Upper lobe of right lung (tissue), 1 donor: ENCODE measurements at regions of chr16 and their contacts with region 1.

Region 1: GRCh38 chr16:85821441-85822135 is 22.1 kb downstream of the COX4I1 start:
- DNase-seq: peak; percentile 87
- ATAC-seq: peak; percentile 97
- H3K4me3 ChIP-seq: no peak overlapping the region
- H3K27ac ChIP-seq: no peak overlapping the region
- H3K4me1 ChIP-seq: no peaks in the 10 kb centered on the region
- H3K27me3 ChIP-seq: peaks cover 10% of the 10 kb centered on the region
- CTCF ChIP-seq: peak; percentile 99

Region 2: DNA sequence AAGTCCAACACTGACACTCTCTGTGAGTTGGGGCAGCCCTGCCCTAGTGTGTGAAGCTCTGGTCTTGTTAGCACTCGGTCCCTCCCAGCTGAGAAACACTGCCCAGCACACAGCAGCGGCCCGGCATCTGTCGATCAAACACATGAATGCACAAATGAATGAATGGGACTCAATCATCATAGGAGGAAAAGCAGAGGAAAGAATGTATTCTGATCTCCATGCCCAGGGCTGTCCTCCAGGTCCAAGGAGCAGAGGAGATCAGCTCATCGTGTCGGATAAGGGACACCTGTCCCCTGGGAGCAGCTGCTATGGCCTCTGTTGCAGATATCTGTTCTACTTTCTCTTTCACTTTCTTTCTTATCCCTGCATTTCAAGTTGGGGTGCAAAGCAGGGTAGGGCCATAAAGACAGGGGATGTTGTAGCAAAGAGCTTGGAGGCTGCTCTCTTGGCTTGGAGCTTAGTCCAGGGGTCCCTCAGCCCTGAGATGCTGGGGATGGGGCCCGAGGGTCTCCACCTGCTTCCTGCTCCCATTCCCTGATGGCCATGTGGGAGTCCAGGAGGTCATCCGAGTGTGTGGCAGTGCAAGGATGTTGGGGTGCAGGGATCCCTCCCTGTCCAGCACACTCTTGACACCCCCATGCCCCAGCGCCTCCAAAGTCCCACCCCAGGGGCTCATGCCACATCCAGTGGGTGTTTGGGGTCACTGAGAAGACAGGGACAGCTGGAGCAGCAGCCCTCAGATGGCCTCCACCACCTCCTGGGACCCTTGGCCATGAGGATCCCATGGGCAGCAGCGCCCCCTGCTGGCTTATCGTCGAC is 165.6 kb after region 1 on chr16:
- intact Hi-C with region 1: loop called (anchors 5 kb)
- DNase-seq: no peak
- ATAC-seq: peak; percentile 45
- H3K4me3 ChIP-seq: no peak overlapping the region
- H3K27ac ChIP-seq: no peak overlapping the region
- H3K4me1 ChIP-seq: peaks cover 24% of the 10 kb centered on the region
- H3K27me3 ChIP-seq: peaks cover 8% of the 10 kb centered on the region
- CTCF ChIP-seq: peak; percentile 57

Region 3: GRCh38 chr16:86016201-86016871 is 194.7 kb after region 1 on chr16:
- intact Hi-C with region 1: loop called (anchors 5 kb)
- DNase-seq: peak; percentile 47
- ATAC-seq: peak; percentile 78
- H3K4me3 ChIP-seq: no peak overlapping the region
- H3K27ac ChIP-seq: no peak overlapping the region
- H3K4me1 ChIP-seq: no peaks in the 10 kb centered on the region
- H3K27me3 ChIP-seq: no peaks in the 10 kb centered on the region
- CTCF ChIP-seq: peak; percentile 78